ENCODE measurements at regions of chr19 and their contacts with region 1.

Region 1: GRCh38 chr19:47296036-47296435 is 13.6 kb upstream of the C5AR1 start:
- ATAC-seq: peak; percentile 92 to 99 (median 94)
- H3K4me3 ChIP-seq: no peak overlapping the region
- H3K27ac ChIP-seq: no peak overlapping the region
- H3K4me1 ChIP-seq: peaks cover 0 to 2% of the 10 kb centered on the region in 2 donors

Region 2: DNA sequence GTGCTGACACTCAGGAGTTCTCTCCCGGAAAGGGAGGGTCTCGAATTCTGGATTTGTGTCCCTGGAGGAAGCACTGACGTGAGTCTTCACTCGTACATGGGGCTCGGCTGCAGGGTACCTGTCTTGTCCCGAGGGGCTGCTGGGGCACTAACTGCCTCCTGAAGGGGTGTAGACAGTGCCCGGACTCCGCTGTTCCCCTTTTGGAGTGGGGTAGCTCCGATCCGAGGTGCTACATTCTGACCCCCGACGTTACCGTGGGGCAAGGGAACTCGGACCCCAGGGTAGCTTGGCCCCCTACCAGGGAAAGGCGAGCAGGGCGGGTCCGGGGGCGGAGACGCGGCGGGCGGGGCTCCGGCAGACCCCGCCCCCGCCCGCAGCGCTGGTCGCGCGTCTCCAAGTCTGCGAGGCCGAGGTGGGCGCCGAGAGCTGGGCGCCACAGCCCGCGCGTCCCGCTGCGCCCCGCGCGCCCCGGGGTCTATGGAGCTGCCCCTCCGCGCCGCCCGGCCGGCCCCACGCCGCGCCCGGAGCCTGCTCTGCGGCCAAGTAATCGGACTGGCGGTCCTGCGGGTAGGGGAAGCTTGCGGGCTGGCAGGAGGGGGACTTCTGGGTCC is 276.5 kb before region 1 on chr19 and contains the start of gene NPAS1:
- in situ Hi-C with region 1: no loop called
- ATAC-seq: peak in 7 of 8 experiments; percentile 19 to 58 (median 50)
- H3K4me3 ChIP-seq: peak within 1 kb of the TSS; percentile 19 to 33 (median 29)
- H3K27ac ChIP-seq: no peak within 1 kb of the TSS
- H3K4me1 ChIP-seq: peaks cover 14 to 21% of the 10 kb centered on the region in 2 donors
- total RNA-seq, gene NPAS1: 0.63 to 3.8 (median 1.6) TPM

Region 3: DNA sequence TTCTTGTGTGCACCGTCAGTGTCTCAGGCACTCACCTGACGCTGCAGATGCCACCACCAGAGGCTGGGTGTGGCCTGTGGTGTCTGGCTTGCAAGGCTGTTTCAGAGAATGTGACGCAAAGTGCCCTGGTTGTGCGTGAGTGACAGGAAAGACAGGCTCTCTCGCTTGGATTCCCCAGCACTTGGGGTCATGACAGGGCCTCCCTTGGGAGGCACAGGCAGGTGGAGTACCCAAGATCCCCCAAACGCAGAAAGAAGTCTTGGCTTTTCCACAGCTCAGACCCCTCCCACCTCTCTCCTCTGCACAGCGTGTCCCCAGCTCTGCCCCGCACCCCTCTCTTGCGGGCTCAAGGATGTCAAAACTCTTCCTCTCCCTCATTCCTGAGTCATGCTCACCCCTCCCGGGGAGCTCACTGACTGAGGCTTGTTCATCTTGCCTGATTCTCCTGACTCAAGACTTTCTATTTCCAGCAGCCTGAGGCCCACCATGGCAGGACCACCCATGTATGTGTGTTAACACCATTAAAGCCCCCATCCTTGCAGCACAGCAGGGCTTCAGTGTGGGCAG is 74.1 kb after region 1 on chr19:
- in situ Hi-C with region 1: no loop called
- ATAC-seq: peak in 2 of 8 experiments; percentile 65 to 71
- H3K4me3 ChIP-seq: no peak overlapping the region
- H3K27ac ChIP-seq: no peak overlapping the region
- H3K4me1 ChIP-seq: no peaks in the 10 kb centered on the region

Region 4: GRCh38 chr19:47406711-47407416 is 110.8 kb after region 1 on chr19:
- in situ Hi-C with region 1: loop called in 3 of 9 experiments (anchors 10 to 25 kb)
- ATAC-seq: peak in 7 of 8 experiments; percentile 28 to 80 (median 55)
- H3K4me3 ChIP-seq: no peak overlapping the region
- H3K27ac ChIP-seq: no peak overlapping the region
- H3K4me1 ChIP-seq: peaks cover 5 to 13% of the 10 kb centered on the region in 2 donors

Region 5: DNA sequence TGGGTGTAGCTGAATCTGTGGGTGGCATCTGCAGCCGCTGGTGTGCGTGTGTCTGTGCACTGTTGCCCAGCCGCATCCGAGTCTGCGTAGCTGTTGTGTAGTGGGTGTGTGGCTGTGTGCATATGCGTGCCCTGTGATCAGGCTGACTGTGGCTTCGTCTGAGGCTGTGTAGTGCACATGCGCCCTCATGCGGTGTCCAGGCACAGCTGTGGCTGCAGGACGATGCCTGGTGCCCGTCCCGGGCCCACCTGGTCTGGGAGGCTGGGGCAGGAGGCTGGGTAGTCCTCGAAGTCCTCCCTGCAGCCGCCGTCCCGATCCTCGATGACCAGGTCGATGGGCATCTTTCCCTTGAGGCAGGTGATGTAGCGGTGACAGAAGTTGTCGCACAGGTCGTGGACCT is 118.4 kb after region 1 on chr19:
- in situ Hi-C with region 1: loop called in 3 of 9 experiments (anchors 10 to 25 kb)
- ATAC-seq: peak in 7 of 8 experiments; percentile 7 to 71 (median 20)
- H3K4me3 ChIP-seq: no peak overlapping the region
- H3K27ac ChIP-seq: no peak overlapping the region
- H3K4me1 ChIP-seq: peaks cover 8 to 12% of the 10 kb centered on the region in 2 donors

Region 6: GRCh38 chr19:47514869-47515588 is 219.0 kb after region 1 on chr19 and contains the start of gene NAPA:
- in situ Hi-C with region 1: loop called in 1 of 9 experiments (anchors 25 kb)
- ATAC-seq: peak; percentile 88 to 97 (median 95)
- H3K4me3 ChIP-seq: peak within 1 kb of the TSS; percentile 50 to 88 (median 83)
- H3K27ac ChIP-seq: peak within 1 kb of the TSS; percentile 91 to 96
- H3K4me1 ChIP-seq: peaks cover 11 to 13% of the 10 kb centered on the region in 2 donors
- total RNA-seq, gene NAPA: 65.3 to 168 (median 103) TPM

Region 7: GRCh38 chr19:47745010-47745901 is 449.2 kb after region 1 on chr19 and contains the start of gene NOP53:
- in situ Hi-C with region 1: loop called in 1 of 9 experiments (anchors 25 kb)
- ATAC-seq: peak; percentile 44 to 78 (median 67)
- H3K4me3 ChIP-seq: peak within 1 kb of the TSS; percentile 93 to 99 (median 97)
- H3K27ac ChIP-seq: peak within 1 kb of the TSS; percentile 99
- H3K4me1 ChIP-seq: peaks cover 9 to 25% of the 10 kb centered on the region in 2 donors
- total RNA-seq, gene NOP53: 106 to 243 (median 168) TPM

Measured in motor neuron (in vitro differentiated cells).